ENCODE measurements at regions of chr6 and their contacts with region 1.

Region 1: DNA sequence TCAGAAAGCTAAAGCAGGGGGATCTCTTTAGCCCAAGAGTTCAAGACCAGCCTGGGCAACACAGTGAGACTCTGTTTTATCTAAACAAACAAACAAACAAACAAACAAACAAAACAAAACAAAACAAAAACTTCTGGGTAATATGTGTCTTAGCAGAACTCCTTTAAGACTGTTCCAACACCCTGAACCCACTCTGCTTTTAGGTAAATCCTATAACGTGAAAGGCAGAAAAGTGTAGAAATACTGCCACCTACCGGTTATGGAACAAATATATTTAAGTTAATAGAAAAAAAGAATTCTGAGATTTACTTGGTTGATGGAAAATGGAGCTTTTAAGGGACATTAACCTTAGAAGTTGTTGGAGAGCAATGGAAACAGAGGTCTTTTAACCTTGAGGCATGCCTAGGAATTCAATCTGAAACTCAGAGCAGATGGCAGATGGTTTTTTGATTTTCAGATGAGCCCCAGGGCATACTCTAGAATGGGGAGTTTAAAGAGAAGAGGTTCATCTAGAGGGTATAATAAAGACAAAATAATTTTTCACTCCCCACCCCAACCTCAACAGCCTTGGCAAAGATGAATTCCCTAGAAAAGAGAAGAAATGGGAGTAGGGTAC is 38.5 kb downstream of the SOD2 start:
- DNase-seq: no peak
- ATAC-seq: no peak
- H3K4me3 ChIP-seq: no peak overlapping the region
- H3K27ac ChIP-seq: no peak overlapping the region
- H3K4me1 ChIP-seq: no peaks in the 10 kb centered on the region
- H3K27me3 ChIP-seq: no peaks in the 10 kb centered on the region
- CTCF ChIP-seq: peak; percentile 24 to 65 (median 54)
- POLR2A ChIP-seq: no peak

Region 2: DNA sequence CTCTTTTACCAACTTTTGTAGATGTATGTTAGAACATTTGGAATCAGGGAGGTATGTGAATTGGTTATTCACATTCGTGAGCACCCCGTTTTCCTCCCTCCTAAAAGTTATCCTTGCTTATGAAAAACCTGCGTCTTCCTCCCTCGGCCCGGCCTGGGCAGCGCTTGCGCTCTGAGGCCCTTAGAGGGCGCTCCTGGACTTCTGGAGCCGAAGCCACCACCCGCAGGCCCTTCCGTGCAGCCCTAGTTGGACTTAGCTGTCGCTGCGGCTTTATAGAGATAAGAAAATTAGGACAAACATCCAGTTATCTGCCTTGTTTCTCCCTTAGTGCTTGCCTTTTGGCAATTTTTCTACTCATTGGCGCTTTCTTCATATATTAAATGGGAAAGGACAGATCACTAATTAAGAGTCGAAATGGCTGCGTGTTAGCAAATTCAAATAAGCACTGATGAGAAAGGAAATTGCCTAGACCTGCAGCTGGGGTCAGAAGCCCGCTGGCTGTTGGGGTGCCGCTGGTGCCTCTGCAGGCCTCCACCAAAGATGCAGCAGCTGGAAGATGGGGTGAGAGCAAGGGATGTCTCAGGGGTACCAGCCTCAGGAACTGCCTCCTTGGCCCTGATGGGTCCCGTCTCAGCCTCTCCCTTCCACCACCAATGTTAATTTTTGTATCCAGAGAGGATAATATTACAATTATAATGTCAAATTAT is 480.2 kb before region 1 on chr6:
- intact Hi-C with region 1: loop called (anchors 10 kb)
- DNase-seq: peak; percentile 66 to 76 (median 72)
- ATAC-seq: peak; percentile 85
- H3K4me3 ChIP-seq: no peak overlapping the region
- H3K27ac ChIP-seq: no peak overlapping the region
- H3K4me1 ChIP-seq: peaks cover 9% of the 10 kb centered on the region
- H3K27me3 ChIP-seq: peaks cover 0 to 8% of the 10 kb centered on the region in 2 donors
- CTCF ChIP-seq: peak; percentile 60 to 89 (median 75)
- POLR2A ChIP-seq: no peak

Region 3: GRCh38 chr6:159505140-159505922 is 149.3 kb before region 1 on chr6:
- intact Hi-C with region 1: no loop called
- DNase-seq: no peak
- ATAC-seq: no peak
- H3K4me3 ChIP-seq: no peak overlapping the region
- H3K27ac ChIP-seq: no peak overlapping the region
- H3K4me1 ChIP-seq: no peaks in the 10 kb centered on the region
- H3K27me3 ChIP-seq: no peaks in the 10 kb centered on the region
- CTCF ChIP-seq: no peak
- POLR2A ChIP-seq: no peak

Measured in body of pancreas (tissue), 4 donors.